Activated naive CD4-positive, alpha-beta T cell treated with anti-CD3 and anti-CD28 coated beads for 36 hours (primary cell): ENCODE measurements at regions of chr12 and their contacts with region 1.

Region 1: GRCh38 chr12:92505254-92506231 is 197.2 kb upstream of the PLEKHG7 start:
- DNase-seq: peak; percentile 77
- H3K4me3 Mint-ChIP-seq: peak overlapping the region; percentile 69
- H3K27ac Mint-ChIP-seq: peak overlapping the region; percentile 89
- H3K4me1 Mint-ChIP-seq: peaks cover 56% of the 10 kb centered on the region
- H3K27me3 Mint-ChIP-seq: no peaks in the 10 kb centered on the region

Region 2: DNA sequence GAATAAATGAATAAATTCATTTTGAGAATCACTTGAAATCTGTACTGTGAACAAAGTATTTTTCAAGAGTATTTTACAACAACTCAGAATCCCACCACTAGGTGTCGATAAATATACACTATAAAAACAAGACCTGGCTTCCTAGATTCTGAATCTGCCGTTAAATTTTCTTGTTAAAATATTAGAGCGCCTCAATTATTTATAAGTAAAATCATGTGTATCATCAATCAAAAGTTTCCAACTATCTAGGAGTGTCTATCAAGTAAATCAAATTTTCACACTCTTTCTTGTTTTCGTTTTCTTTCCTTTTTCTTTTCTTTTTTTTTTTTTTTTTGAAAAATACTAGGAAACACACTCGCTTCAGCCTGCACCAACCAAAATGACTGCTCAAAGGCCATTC is 1143.7 kb before region 1 on chr12:
- CTCF ChIA-PET with region 1: no interaction called
- intact Hi-C with region 1: loop called (anchors 5 kb)
- DNase-seq: no peak
- H3K4me3 Mint-ChIP-seq: no peak overlapping the region
- H3K27ac Mint-ChIP-seq: no peak overlapping the region
- H3K4me1 Mint-ChIP-seq: peaks cover 3% of the 10 kb centered on the region
- H3K27me3 Mint-ChIP-seq: no peaks in the 10 kb centered on the region

Region 3: DNA sequence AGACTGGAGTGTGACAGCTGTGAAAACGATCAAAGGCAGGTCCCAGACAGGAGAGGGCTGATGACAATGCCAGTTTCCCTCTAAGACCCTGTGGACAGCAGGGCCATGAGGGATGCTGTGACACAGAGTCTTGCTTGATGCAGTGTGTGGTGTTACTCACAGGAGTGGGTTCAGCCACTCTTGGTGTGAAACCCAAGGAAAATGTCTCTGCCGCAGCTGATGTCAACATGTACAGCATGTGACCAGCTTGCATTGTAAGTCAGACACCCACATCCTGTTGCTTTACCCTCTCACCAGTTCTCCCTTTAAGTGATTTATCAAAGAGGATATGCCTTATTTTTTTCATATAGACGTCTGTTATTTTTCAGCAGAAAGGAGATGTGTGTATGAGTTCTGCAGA is 628.5 kb before region 1 on chr12:
- CTCF ChIA-PET with region 1: no interaction called
- intact Hi-C with region 1: loop called (anchors 5 kb)
- DNase-seq: peak; percentile 94
- H3K4me3 Mint-ChIP-seq: peak overlapping the region; percentile 67
- H3K27ac Mint-ChIP-seq: peak overlapping the region; percentile 94
- H3K4me1 Mint-ChIP-seq: peaks cover 67% of the 10 kb centered on the region
- H3K27me3 Mint-ChIP-seq: no peaks in the 10 kb centered on the region

Region 4: DNA sequence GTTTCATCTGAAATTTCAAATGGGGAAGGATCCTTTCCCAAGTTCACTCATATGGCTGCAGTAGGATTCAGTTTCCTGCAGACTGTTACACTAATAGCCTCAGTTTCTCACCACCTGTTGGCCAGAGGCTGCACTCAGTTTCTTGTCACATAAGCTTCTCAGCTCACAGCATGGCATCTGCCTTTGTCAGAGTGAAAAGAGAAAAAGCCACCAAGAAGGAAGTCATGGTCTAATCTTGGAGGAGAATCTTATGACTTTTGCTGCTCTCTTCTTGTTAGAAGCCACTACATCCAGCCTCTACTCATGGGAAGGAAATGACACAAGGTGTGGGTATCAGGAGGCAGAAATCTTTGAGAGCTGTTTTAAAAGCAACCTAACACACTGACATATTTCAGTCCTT is 320.5 kb before region 1 on chr12:
- CTCF ChIA-PET with region 1: no interaction called
- intact Hi-C with region 1: loop called (anchors 1 kb)
- DNase-seq: peak; percentile 62
- H3K4me3 Mint-ChIP-seq: peak overlapping the region; percentile 36
- H3K27ac Mint-ChIP-seq: peak overlapping the region; percentile 89
- H3K4me1 Mint-ChIP-seq: peaks cover 64% of the 10 kb centered on the region
- H3K27me3 Mint-ChIP-seq: no peaks in the 10 kb centered on the region

Region 5: DNA sequence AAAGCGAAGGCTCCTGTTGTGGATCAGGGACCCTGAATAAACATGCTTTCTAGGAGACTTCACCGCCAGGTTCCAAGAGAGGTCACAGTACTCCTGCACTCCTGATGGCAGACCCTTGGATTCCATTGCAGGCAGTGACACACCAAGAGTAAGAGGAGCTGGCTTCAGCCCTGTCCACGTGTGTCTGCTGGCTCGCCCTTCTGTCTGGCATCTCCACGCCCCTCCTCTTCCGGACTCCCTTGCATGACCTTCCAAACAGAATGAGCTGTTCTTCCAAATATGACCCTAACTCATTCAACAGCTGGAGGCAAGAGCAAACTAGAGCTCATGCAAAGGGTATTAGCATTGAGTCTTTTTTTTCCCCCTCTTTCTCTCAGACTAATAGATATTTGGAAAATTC is 35.7 kb before region 1 on chr12:
- CTCF ChIA-PET with region 1: interaction called, 4 read pairs
- intact Hi-C with region 1: loop called (anchors 1 kb)
- DNase-seq: no peak
- H3K4me3 Mint-ChIP-seq: no peak overlapping the region
- H3K27ac Mint-ChIP-seq: peak overlapping the region; percentile 89
- H3K4me1 Mint-ChIP-seq: peaks cover 49% of the 10 kb centered on the region
- H3K27me3 Mint-ChIP-seq: no peaks in the 10 kb centered on the region

Region 6: GRCh38 chr12:92551853-92552397 is 46.4 kb after region 1 on chr12:
- CTCF ChIA-PET with region 1: interaction called, 9 read pairs
- intact Hi-C with region 1: loop called (anchors 1 kb)
- DNase-seq: peak; percentile 83
- H3K4me3 Mint-ChIP-seq: no peak overlapping the region
- H3K27ac Mint-ChIP-seq: no peak overlapping the region
- H3K4me1 Mint-ChIP-seq: peaks cover 38% of the 10 kb centered on the region
- H3K27me3 Mint-ChIP-seq: no peaks in the 10 kb centered on the region

Region 7: GRCh38 chr12:92702754-92703679 is 197.5 kb after region 1 on chr12 and contains the start of gene PLEKHG7:
- CTCF ChIA-PET with region 1: no interaction called
- intact Hi-C with region 1: loop called (anchors 2 kb)
- DNase-seq: peak; percentile 26
- H3K4me3 Mint-ChIP-seq: no peak within 1 kb of the TSS
- H3K27ac Mint-ChIP-seq: no peak within 1 kb of the TSS
- H3K4me1 Mint-ChIP-seq: peaks cover 21% of the 10 kb centered on the region
- H3K27me3 Mint-ChIP-seq: no peaks in the 10 kb centered on the region
- total RNA-seq, gene PLEKHG7: not detected

Region 8: DNA sequence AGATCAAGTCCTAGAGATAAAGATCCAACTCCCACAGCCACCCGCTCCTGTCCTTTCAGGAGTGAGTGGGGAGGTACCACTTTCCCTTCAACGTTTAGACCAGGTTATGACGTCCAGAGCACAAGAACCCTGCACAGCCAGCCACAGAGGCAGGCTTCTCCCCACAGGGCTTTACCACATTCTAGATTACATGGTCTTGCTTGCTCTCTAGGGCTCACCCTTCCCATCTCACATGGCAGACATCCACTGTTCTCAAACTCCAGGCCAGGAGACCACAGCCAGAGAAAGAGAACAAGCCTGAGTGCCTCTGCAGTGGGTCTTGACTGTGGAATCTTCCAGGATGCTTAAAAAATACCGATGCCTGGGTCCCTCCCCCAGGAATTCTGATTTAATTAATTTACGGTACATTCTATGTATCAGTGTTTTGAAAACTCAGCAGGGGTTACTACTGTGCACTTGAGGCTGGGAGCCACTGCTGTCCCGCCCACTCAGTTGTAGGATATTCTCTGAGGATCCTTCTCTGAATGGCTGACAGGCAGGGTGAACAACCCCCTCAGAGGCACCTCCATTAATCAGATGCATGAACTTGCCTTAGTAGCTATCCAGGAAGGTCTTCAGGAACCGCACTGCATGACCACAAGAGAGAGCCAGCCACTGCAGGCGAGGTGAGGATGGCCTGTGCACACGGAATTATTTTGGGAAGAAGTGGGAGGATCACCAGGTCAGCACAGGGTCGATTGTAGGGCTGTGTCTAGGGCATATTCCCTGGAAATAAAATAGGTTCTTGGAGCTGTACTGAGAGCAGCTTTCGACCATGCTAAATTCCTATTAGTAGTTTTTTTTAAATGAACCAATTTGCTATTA is 1045.4 kb after region 1 on chr12:
- CTCF ChIA-PET with region 1: no interaction called
- intact Hi-C with region 1: no loop called
- DNase-seq: no peak
- H3K4me3 Mint-ChIP-seq: no peak overlapping the region
- H3K27ac Mint-ChIP-seq: no peak overlapping the region
- H3K4me1 Mint-ChIP-seq: peaks cover 5% of the 10 kb centered on the region
- H3K27me3 Mint-ChIP-seq: no peaks in the 10 kb centered on the region